Activated CD4-positive, alpha-beta T cell treated with anti-CD3 and anti-CD28 coated beads for 36 hours (primary cell): ENCODE measurements at regions of chr1 and their contacts with region 1.

Region 1: DNA sequence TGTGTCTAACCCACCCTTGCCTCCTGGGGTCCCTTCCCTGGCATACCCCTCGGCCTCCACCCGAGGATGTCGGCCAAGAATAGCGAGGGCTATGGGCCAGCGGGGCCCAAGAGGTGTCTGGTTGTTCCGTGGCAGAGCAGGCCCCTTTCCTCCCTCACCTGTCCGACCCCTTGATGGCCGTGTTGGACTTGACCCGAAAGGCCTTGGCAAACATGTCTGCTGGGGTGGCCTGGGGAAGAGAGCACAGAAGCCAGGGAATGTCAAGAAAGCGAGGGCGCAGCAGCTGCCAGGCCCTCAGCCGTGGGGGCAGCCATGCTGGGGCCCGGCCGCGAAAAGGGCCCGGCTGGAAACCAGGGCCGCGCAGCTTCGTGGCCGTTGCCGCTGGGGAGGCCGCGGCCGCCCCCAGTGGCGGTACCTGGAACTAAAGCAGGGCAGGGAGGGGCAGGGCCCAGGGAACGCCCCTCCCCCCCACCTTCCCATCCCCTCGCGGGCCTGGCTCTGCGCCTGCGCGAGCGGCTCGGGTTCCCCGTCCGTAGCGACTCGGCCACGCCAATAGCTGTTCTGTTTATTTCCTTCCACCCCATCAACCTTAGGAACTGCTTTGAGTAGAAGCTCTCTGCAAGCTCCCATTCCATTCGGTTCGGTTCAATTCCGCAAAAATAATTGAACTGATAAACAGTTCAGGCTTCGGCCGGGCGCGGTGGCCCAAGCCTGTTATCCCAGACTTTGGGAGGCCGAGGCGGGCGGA is at the start of gene EIF2D:
- DNase-seq: peak; percentile 98
- ATAC-seq: peak; percentile 87
- H3K4me3 Mint-ChIP-seq: peak within 1 kb of the TSS; percentile 92
- H3K27ac Mint-ChIP-seq: peak within 1 kb of the TSS; percentile 94
- H3K4me1 Mint-ChIP-seq: peaks cover 40% of the 10 kb centered on the region
- H3K27me3 Mint-ChIP-seq: no peaks in the 10 kb centered on the region
- total RNA-seq, gene EIF2D: 91.2 to 100 TPM

Region 2: DNA sequence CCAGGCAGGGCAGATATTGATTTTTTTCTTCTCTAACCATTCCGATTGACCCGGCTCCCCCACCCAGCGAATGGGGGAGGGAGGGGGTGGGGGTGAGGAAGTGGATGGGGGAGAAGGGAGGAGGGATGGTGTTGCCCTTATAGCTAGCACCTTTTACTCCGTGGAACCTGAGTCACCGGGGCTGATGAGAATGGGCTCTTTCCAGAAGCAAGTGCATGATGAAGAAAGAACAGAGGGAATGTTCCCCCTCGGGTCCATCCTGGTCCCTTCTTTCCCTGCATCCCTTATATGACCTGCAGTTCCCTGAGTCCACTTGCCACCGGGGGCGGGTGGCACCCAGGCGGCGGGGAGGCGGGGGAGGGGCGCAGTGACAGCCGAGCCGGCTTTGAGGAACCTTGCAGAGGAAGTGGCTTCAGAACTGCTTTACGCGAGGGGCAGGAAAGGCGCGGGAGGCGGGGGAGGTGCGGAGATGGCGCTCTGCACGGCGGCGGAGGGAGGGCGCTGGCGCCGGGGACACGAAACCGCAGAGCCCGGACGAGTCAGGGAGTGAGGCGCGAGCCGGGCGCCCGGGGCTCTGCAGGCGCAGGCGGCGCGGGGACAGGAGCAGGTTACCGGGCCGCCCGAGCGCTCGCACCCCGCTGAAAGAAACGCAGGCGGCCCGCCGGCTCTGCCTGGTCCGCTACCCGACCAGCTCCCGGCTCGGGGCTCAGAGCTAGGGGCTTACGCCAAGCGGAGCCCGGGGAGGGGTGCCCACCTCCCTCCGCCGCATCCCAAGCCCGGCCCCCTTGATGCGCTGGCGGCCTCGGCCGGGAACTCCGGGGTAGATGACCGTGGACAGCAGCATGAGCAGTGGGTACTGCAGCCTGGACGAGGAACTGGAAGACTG is 55.3 kb before region 1 on chr1:
- CTCF ChIA-PET with region 1: interaction called, 6 read pairs
- POLR2A ChIA-PET with region 1: no interaction called
- intact Hi-C with region 1: loop called in 1 of 2 experiments (anchors 1 kb)
- DNase-seq: peak; percentile 95
- ATAC-seq: peak; percentile 43
- H3K4me3 Mint-ChIP-seq: peak overlapping the region; percentile 95
- H3K27ac Mint-ChIP-seq: peak overlapping the region; percentile 99
- H3K4me1 Mint-ChIP-seq: peaks cover 66% of the 10 kb centered on the region
- H3K27me3 Mint-ChIP-seq: no peaks in the 10 kb centered on the region

Region 3: DNA sequence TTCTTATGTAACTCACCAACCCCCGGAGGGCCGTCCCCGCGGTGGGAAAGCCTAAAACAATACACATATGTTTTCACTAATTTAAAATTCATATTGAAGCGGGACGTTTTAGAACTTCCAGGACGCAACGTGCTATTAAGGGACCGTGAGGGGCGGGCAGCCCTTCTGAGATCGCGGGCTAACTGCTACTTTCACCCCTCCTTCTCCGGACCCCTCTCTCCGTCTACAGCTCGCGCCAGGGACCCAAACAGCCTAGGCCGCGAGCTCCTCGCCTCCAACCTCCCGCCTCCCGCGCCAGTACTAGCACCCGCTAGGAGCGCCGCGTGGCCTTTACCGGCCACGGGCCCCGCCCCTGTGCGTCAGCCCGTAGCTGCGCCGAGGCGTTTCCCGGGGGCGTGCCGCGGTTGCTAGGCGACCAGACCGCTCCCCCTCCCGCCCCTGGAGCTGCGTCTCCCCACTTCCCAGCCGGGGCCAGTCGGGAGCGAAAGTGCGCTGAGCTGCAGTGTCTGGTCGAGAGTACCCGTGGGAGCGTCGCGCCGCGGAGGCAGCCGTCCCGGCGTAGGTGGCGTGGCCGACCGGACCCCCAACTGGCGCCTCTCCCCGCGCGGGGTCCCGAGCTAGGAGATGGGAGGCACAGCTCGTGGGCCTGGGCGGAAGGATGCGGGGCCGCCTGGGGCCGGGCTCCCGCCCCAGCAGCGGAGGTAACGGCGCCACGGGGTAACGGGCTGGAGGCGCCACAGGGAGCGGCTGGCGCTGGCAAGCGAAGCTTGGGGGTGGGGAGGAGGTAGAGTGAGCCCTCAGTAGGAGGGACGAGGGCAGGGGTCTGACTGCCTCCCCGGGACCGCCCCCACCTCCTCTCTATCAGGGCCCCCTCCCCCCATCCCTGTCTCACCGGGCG is 23.0 kb after region 1 on chr1 and contains the start of gene DYRK3:
- CTCF ChIA-PET with region 1: interaction called, 60 read pairs
- POLR2A ChIA-PET with region 1: no interaction called
- intact Hi-C with region 1: loop called (anchors 1 kb)
- DNase-seq: peak; percentile 97
- ATAC-seq: peak; percentile 93
- H3K4me3 Mint-ChIP-seq: peak within 1 kb of the TSS; percentile 76
- H3K27ac Mint-ChIP-seq: peak within 1 kb of the TSS; percentile 87
- H3K4me1 Mint-ChIP-seq: peaks cover 27% of the 10 kb centered on the region
- H3K27me3 Mint-ChIP-seq: peaks cover 7% of the 10 kb centered on the region
- total RNA-seq, gene DYRK3: 8.3 to 8.7 TPM

Region 4: GRCh38 chr1:206798384-206798996 is 186.2 kb after region 1 on chr1:
- CTCF ChIA-PET with region 1: no interaction called
- POLR2A ChIA-PET with region 1: no interaction called
- intact Hi-C with region 1: no loop called
- DNase-seq: peak; percentile 60
- ATAC-seq: peak; percentile 1
- H3K4me3 Mint-ChIP-seq: no peak overlapping the region
- H3K27ac Mint-ChIP-seq: peak overlapping the region; percentile 16
- H3K4me1 Mint-ChIP-seq: peaks cover 65% of the 10 kb centered on the region
- H3K27me3 Mint-ChIP-seq: peaks cover 19% of the 10 kb centered on the region